ENCODE measurements at regions of chr1 and their contacts with region 1.

Region 1: DNA sequence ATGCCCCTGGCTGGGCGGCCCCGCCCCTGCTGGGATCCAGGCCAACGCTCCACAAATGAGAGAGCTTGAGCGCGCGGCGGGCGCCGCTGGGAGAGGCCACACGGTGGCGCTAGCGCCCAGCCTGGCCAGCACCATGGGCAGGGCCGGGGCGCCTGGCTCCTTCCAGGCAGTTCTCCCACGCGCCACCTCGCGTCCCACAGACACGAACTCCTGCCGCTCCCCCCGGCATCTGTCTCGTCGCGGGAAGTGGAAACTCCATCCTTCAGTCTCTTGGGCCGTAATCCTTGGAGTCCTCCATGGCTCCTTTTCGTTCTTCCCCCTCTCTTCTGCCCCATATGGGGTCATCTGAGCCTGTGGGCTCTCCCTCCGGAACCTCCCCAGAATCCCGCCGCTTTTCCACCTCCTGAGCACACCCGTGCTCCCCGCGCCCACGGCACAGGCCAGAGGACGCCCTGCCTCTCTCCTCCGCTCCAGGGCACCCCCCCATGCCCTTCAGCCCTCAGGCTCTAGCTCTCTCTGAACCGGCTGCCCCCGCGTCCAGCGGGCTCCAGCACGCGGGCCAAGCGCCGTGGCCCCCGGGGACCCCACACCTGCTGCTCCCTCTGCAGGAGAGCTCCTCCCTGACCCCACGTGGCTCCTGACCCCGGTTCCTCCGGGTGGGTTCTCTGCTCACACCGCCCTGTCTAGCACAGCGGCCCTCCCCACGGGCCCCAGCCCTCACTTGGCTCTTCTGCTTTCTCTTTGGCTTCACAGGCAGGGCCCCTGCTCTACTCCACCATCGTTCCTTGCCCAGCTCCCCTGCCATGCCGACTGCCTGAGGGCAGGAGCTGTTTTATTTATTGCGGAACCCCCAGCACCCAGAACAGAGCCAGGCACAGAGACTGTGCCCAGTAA is 31.9 kb upstream of the EDN2 start:
- DNase-seq: peak; percentile 93
- H3K4me3 ChIP-seq: peak overlapping the region; percentile 26 to 50 (median 36)
- H3K27ac ChIP-seq: peak overlapping the region; percentile 47 to 83 (median 66)
- H3K4me1 ChIP-seq: peaks cover 14 to 28% (median 24%) of the 10 kb centered on the region in 4 donors
- H3K27me3 ChIP-seq: no peaks in the 10 kb centered on the region
- CTCF ChIP-seq: peak; percentile 75 to 92 (median 90)
- EP300 ChIP-seq: no peak
- POLR2A ChIP-seq: no peak

Region 2: GRCh38 chr1:41268154-41268770 is 248.2 kb before region 1 on chr1:
- in situ Hi-C with region 1: no loop called
- intact Hi-C with region 1: loop called (anchors 5 kb)
- DNase-seq: peak; percentile 78
- H3K4me3 ChIP-seq: no peak overlapping the region
- H3K27ac ChIP-seq: no peak overlapping the region
- H3K4me1 ChIP-seq: no peaks in the 10 kb centered on the region
- H3K27me3 ChIP-seq: no peaks in the 10 kb centered on the region
- CTCF ChIP-seq: peak; percentile 93 to 99 (median 98)
- EP300 ChIP-seq: no peak
- POLR2A ChIP-seq: no peak

Region 3: GRCh38 chr1:42958488-42959319 is 1442.3 kb after region 1 on chr1 and contains the start of gene SLC2A1:
- in situ Hi-C with region 1: no loop called
- intact Hi-C with region 1: no loop called
- DNase-seq: peak; percentile 94
- H3K4me3 ChIP-seq: peak within 1 kb of the TSS; percentile 52 to 89 (median 74)
- H3K27ac ChIP-seq: peak within 1 kb of the TSS; percentile 88 to 97 (median 93)
- H3K4me1 ChIP-seq: peaks cover 0 to 45% (median 25%) of the 10 kb centered on the region in 4 donors
- H3K27me3 ChIP-seq: peaks cover 16% of the 10 kb centered on the region
- CTCF ChIP-seq: peak in 1 of 5 experiments; percentile 14
- EP300 ChIP-seq: no peak
- POLR2A ChIP-seq: peak; percentile 97
- total RNA-seq, gene SLC2A1: 37.2 to 98.9 (median 69.1) TPM

Measured in transverse colon (tissue), 4 donors.